ENCODE measurements at regions of chr9 and their contacts with region 1.

Region 1: DNA sequence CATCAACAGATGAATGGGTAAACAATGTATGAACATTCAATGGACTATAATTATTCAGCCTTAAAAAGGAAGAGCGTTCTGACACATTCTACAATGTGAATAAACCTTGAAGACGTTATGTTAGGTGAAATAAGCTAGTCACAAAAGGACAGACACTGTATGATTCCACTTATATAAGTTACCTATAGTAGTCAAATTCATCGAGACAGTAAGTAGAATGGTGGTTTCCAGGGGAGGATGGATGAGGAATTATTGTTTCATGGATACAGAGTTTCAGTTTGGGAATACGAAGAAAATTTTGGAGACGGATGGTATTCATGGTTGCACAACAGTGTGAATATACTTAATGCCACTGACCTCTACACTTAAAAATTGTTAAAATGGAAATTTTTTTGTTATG is 216.4 kb downstream of the CACNA1B start:
- DNase-seq: no peak
- H3K4me3 ChIP-seq: no peak overlapping the region
- H3K27ac ChIP-seq: no peak overlapping the region
- H3K4me1 ChIP-seq: no peaks in the 10 kb centered on the region
- H3K27me3 ChIP-seq: no peaks in the 10 kb centered on the region
- CTCF ChIP-seq: no peak
- EP300 ChIP-seq: no peak
- POLR2A ChIP-seq: no peak

Region 2: DNA sequence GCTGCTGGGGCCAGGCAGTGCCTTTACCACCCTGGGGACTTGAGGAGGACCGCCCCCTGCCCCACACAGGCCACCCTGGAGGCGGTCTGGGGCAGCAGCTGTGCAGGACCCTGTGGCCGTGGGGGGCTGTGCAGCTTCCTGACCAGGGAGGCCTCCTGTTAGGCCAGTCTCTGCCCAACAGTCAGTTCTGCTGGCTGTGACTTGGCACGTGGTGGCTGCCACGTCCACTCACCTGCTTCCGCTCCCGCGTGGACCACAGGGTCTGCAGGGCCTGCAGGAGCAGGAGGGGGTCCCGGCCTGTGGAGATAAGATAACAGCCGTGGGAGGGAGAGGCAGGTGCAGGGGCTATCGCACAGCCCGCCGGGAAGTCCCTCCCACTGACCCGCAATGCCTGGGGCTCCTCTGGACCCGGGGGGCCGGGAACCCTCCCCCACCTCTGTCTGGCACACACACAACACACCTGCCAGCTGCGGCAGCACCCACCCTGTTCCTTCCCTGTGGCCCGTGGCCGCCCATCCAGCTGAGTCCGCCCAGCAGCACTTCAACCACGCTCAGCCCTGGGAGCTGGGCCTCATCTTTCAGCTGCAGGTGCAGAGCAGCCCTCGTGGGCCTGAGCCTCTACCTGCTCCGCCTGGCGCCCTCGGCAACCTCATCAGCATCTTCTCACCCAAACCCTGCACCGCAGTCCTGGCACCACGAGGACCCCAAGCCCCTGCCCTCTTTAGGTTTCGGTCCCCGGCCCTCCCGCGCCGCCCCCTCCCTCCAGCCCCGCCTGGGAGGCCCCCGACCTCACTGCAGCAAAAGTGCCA is 710.7 kb before region 1 on chr9:
- in situ Hi-C with region 1: no loop called
- intact Hi-C with region 1: loop called (anchors 5 kb)
- DNase-seq: no peak
- H3K4me3 ChIP-seq: no peak overlapping the region
- H3K27ac ChIP-seq: no peak overlapping the region
- H3K4me1 ChIP-seq: no peaks in the 10 kb centered on the region
- H3K27me3 ChIP-seq: no peaks in the 10 kb centered on the region
- CTCF ChIP-seq: no peak
- EP300 ChIP-seq: no peak
- POLR2A ChIP-seq: no peak

Measured in transverse colon (tissue), 4 donors.